Ovary (tissue), 10 donors: ENCODE measurements at regions of chr12 and their contacts with region 1.

Region 1: DNA sequence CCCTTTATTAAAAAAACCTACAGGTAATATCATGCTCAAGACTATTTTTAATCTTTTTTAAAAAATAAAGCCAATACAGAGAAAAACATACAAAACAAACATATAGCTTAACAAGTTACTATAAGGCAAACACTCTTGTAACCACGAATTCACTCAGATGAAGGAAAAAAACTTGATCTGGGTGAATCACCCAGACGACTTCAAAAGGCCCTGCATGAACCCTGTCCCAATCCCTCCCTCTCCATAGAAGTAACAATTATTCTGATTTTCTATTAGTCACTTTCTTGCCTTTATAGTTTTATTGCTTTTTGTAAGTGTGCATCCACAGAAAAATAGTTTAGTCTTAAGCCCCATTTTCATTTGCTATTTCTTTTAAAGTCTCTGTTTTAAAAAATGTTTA is 72.6 kb downstream of the LRP6 start:
- DNase-seq: no peak
- H3K4me3 ChIP-seq: no peak overlapping the region
- H3K27ac ChIP-seq: no peak overlapping the region
- H3K4me1 ChIP-seq: no peaks in the 10 kb centered on the region
- H3K27me3 ChIP-seq: no peaks in the 10 kb centered on the region
- CTCF ChIP-seq: no peak
- EP300 ChIP-seq: no peak
- POLR2A ChIP-seq: no peak

Region 2: DNA sequence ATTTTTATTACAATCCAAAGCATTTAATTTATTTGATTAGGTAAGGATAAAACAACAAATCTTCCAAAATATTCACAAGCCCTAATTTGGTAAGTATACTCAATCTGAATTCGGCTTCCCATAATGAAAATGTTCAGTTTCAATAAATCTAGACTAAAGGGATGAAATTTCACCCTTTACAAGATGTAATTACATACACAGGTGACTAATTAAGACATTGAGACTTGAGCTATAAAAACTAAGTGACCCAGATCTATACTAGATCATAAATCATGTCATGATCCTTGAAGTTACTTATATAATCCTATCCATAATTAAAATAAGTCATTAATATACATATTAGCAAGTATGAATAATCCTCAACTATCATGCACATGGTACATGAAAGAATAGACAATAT is 36.1 kb after region 1 on chr12:
- intact Hi-C with region 1: no loop called
- DNase-seq: no peak
- H3K4me3 ChIP-seq: no peak overlapping the region
- H3K27ac ChIP-seq: no peak overlapping the region
- H3K4me1 ChIP-seq: peaks cover 1% of the 10 kb centered on the region
- H3K27me3 ChIP-seq: no peaks in the 10 kb centered on the region
- CTCF ChIP-seq: no peak
- EP300 ChIP-seq: no peak
- POLR2A ChIP-seq: no peak

Region 3: GRCh38 chr12:12592930-12593329 is 398.7 kb after region 1 on chr12:
- intact Hi-C with region 1: loop called in 1 of 4 experiments (anchors 10 kb)
- DNase-seq: no peak
- H3K4me3 ChIP-seq: no peak overlapping the region
- H3K27ac ChIP-seq: no peak overlapping the region
- H3K4me1 ChIP-seq: no peaks in the 10 kb centered on the region
- H3K27me3 ChIP-seq: no peaks in the 10 kb centered on the region
- CTCF ChIP-seq: no peak
- EP300 ChIP-seq: no peak
- POLR2A ChIP-seq: no peak